Ascending aorta (tissue), 2 donors: ENCODE measurements at regions of chrX and their contacts with region 1.

Region 1: GRCh38 chrX:9464435-9465371 is at the start of gene TBL1X:
- DNase-seq: peak in 1 of 2 donors; percentile 73
- H3K4me3 ChIP-seq: peak within 1 kb of the TSS; percentile 63 to 70
- H3K27ac ChIP-seq: peak within 1 kb of the TSS; percentile 87 to 93
- H3K4me1 ChIP-seq: peaks cover 3 to 33% of the 10 kb centered on the region in 2 donors
- H3K27me3 ChIP-seq: no peaks in the 10 kb centered on the region
- CTCF ChIP-seq: no peak
- total RNA-seq, gene TBL1X: 15.4 TPM

Region 2: GRCh38 chrX:8868906-8869305 is 595.8 kb before region 1 on chrX:
- intact Hi-C with region 1: loop called (anchors 10 kb)
- DNase-seq: no peak
- H3K4me3 ChIP-seq: no peak overlapping the region
- H3K27ac ChIP-seq: no peak overlapping the region
- H3K4me1 ChIP-seq: peaks cover 0 to 14% of the 10 kb centered on the region in 2 donors
- H3K27me3 ChIP-seq: no peaks in the 10 kb centered on the region
- CTCF ChIP-seq: peak in 2 of 3 experiments; percentile 29 to 45

Region 3: DNA sequence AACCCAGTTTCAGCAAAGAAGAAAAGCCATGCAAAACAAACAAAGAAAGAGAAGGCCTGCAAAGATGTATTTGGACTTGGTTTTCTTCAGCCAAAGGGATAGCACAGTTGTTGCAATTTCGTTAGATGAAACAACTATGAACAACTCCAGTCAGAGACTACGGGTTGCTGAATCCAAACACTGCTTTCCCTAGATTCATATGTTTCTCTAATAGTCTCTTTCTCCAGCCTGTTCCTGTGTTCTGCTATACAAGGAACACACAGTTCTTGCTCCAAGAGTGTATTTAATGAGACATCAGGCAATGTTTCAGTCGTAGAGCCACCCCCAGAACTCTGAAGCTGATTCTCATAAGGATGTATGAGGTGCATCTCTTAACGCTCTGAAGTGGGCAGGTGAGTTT is 162.3 kb before region 1 on chrX:
- intact Hi-C with region 1: no loop called
- DNase-seq: no peak
- H3K4me3 ChIP-seq: no peak overlapping the region
- H3K27ac ChIP-seq: peak overlapping the region; percentile 38 to 66
- H3K4me1 ChIP-seq: peaks cover 3% of the 10 kb centered on the region in 2 donors
- H3K27me3 ChIP-seq: no peaks in the 10 kb centered on the region
- CTCF ChIP-seq: no peak

Region 4: GRCh38 chrX:9416632-9417319 is 47.9 kb before region 1 on chrX:
- intact Hi-C with region 1: loop called (anchors 2 kb)
- DNase-seq: peak in 1 of 2 donors; percentile 72
- H3K4me3 ChIP-seq: peak overlapping the region in 1 of 2 donors; percentile 11
- H3K27ac ChIP-seq: peak overlapping the region; percentile 32 to 37
- H3K4me1 ChIP-seq: peaks cover 0 to 3% of the 10 kb centered on the region in 2 donors
- H3K27me3 ChIP-seq: no peaks in the 10 kb centered on the region
- CTCF ChIP-seq: no peak

Region 5: GRCh38 chrX:9530848-9531274 is 66.2 kb after region 1 on chrX:
- intact Hi-C with region 1: loop called (anchors 5 kb)
- DNase-seq: peak in 1 of 2 donors; percentile 79
- H3K4me3 ChIP-seq: no peak overlapping the region
- H3K27ac ChIP-seq: no peak overlapping the region
- H3K4me1 ChIP-seq: peaks cover 3 to 14% of the 10 kb centered on the region in 2 donors
- H3K27me3 ChIP-seq: no peaks in the 10 kb centered on the region
- CTCF ChIP-seq: no peak

Region 6: DNA sequence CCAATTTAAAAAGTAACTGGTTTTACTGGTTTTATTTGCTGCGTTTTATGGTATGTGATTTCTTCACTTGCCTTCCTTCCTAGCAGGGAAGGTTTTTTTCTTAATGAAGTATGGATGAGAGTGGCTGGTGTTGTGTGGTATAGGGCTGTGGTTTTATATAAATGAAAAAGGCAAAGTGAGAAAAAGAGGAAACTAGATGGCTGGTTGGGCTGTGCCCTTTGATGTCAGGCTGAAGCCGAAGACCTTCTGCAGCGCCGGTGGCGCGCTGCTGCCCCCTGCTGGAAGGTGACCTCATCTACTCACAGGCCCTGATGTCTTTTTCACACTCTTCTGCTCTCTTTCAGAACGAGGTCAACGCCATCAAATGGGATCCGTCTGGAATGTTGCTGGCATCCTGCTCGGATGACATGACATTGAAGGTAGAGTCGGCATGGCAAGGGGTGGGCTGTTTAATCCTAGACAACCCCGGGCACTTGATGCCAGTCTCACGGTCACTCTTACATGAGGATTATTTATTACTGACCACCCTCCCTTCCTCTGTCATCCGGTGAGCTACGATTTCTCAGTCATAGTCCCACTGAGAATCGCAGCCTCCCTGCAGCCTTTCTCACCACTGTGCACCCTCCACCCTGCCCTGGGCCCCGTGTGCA is 244.3 kb after region 1 on chrX:
- intact Hi-C with region 1: loop called (anchors 2 kb)
- DNase-seq: peak; percentile 16 to 82
- H3K4me3 ChIP-seq: no peak overlapping the region
- H3K27ac ChIP-seq: no peak overlapping the region
- H3K4me1 ChIP-seq: no peaks in the 10 kb centered on the region
- H3K27me3 ChIP-seq: no peaks in the 10 kb centered on the region
- CTCF ChIP-seq: peak; percentile 77 to 89 (median 83)

Region 7: DNA sequence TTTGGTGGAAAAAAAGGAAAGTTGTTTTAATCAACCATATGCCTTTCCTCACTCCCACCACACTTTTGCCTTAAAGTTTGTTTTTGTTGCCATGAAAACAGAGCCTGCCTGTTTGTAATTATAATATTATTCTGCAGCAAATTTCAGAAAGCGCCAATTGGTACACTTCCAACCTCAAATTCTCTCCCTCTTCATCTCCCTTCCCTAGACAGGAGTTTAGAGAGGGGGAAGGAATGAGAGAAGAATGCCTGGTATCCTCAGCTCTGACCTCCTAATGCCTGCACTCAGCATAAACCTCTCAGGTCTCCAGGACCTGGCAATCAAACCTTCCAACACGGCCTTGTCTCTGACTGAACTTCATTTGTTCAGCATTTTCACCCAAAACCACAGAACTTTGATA is 1508.0 kb after region 1 on chrX:
- intact Hi-C with region 1: no loop called
- DNase-seq: no peak
- H3K4me3 ChIP-seq: no peak overlapping the region
- H3K27ac ChIP-seq: no peak overlapping the region
- H3K4me1 ChIP-seq: peaks cover 0 to 2% of the 10 kb centered on the region in 2 donors
- H3K27me3 ChIP-seq: no peaks in the 10 kb centered on the region
- CTCF ChIP-seq: no peak